ENCODE measurements at regions of chr10 and their contacts with region 1.

Region 1: DNA sequence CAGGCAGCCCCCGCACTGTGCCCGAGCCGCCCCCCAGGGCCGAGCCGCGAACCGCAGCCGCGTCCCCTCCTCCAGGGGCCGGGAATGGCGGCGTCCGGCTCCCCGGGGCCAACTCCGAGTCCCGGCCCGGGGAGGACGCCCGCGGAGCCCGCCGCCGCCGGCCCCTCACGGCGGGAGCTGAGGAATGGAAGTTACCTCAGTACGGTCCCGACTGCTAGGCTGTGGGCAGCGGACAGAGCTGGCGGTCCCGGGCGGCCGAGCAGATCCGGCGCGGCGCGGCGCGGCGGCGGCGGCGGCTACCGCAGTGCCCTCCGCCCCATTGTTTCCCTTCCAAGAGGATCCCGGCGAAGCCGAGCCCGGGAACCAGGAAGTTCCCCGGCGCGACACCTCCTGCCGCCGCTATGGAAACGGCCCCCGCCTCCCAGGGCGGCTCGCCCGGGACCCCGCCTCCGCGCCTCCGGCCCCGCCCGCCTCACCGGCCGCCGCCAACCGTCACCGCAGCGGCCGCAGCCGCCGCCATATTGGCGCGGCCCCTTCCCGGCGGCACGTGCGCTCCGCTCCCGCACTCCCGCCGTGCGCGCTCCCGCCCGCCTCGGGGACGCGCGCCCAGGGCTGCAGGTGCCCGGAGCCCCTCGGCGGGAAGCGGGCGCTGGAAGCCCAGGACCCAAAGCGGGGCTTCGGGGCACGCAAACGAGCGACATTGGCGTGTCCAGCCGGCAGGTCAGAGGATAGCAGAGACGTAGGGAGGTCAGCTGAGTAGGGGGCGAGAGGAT is at the start of gene USP6NL:
- DNase-seq: peak in 8 of 9 experiments; percentile 43 to 75 (median 63)
- ATAC-seq: peak; percentile 63
- H3K4me3 ChIP-seq: peak within 1 kb of the TSS; percentile 49 to 59
- H3K4me3 Mint-ChIP-seq: peak within 1 kb of the TSS; percentile 90
- H3K27ac ChIP-seq: peak within 1 kb of the TSS in 1 of 2 experiments; percentile 33
- H3K27ac Mint-ChIP-seq: peak within 1 kb of the TSS; percentile 87
- H3K4me1 ChIP-seq: peaks cover 14% of the 10 kb centered on the region
- H3K4me1 Mint-ChIP-seq: peaks cover 58% of the 10 kb centered on the region
- H3K27me3 ChIP-seq: peaks cover 0 to 3% of the 10 kb centered on the region in 2 experiments
- H3K27me3 Mint-ChIP-seq: no peaks in the 10 kb centered on the region
- CTCF ChIP-seq: no peak
- total RNA-seq, gene USP6NL: 5.7 to 6.3 TPM

Region 2: GRCh38 chr10:11533328-11533781 is 78.1 kb before region 1 on chr10:
- CTCF ChIA-PET with region 1: no interaction called
- POLR2A ChIA-PET with region 1: no interaction called
- intact Hi-C with region 1: loop called in 1 of 2 experiments (anchors 5 kb)
- DNase-seq: peak in 1 of 9 experiments; percentile 11
- ATAC-seq: no peak
- H3K4me3 ChIP-seq: no peak overlapping the region
- H3K4me3 Mint-ChIP-seq: no peak overlapping the region
- H3K27ac ChIP-seq: no peak overlapping the region
- H3K27ac Mint-ChIP-seq: no peak overlapping the region
- H3K4me1 ChIP-seq: peaks cover 16% of the 10 kb centered on the region
- H3K4me1 Mint-ChIP-seq: peaks cover 30% of the 10 kb centered on the region
- H3K27me3 ChIP-seq: no peaks in the 10 kb centered on the region
- H3K27me3 Mint-ChIP-seq: no peaks in the 10 kb centered on the region
- CTCF ChIP-seq: no peak

Region 3: DNA sequence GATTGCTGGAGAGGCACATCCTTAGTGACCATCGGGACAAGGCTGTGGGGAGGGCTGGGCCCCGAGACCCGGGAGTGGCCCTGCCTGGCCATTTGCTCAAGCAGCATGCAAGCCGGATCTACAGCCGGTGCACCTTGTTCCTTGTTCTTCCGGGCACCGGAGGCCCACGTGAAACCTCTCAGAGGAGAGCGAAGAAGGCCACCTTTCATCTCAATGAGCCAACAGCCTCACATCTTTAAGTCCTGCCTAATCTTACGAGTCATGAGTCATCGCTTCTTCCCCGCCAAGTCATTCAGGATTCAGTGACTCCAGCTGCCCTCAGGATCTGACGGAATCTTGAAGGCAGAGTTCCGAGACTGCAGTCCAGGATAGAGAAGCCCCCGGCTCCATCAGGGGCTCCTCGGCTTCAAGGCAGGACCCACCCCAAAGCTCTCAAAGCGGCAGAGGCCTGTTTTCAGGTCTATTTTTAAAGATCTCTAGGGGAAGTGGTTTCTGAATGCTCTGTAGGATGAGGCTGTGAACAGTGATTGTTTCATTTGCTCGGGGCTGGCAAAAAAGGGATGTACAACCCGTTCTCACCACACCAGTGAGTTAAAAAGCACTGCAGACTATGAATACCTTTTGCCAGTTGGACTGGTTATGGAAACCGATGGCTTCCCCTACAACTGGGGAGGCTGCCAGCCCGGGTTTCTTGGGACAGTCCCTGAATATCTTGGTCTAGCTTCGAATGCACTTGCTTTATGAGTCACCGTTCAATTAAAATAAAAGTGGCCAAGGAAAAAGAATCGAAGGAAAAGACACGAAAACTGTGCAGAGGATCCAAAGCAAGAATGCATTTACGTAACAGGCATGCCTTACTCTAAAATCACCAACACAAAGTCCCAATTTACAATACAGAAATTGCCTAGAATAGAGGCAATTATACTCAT is 73.5 kb after region 1 on chr10:
- CTCF ChIA-PET with region 1: no interaction called
- POLR2A ChIA-PET with region 1: interaction called, 3 read pairs
- intact Hi-C with region 1: loop called (anchors 2 to 5 kb)
- DNase-seq: peak; percentile 24 to 86 (median 62)
- ATAC-seq: peak; percentile 81
- H3K4me3 ChIP-seq: peak overlapping the region; percentile 45 to 47
- H3K4me3 Mint-ChIP-seq: peak overlapping the region; percentile 86
- H3K27ac ChIP-seq: peak overlapping the region; percentile 79 to 90
- H3K27ac Mint-ChIP-seq: peak overlapping the region; percentile 98
- H3K4me1 ChIP-seq: peaks cover 56% of the 10 kb centered on the region
- H3K4me1 Mint-ChIP-seq: peaks cover 70% of the 10 kb centered on the region
- H3K27me3 ChIP-seq: no peaks in the 10 kb centered on the region
- H3K27me3 Mint-ChIP-seq: no peaks in the 10 kb centered on the region
- CTCF ChIP-seq: no peak

Region 4: DNA sequence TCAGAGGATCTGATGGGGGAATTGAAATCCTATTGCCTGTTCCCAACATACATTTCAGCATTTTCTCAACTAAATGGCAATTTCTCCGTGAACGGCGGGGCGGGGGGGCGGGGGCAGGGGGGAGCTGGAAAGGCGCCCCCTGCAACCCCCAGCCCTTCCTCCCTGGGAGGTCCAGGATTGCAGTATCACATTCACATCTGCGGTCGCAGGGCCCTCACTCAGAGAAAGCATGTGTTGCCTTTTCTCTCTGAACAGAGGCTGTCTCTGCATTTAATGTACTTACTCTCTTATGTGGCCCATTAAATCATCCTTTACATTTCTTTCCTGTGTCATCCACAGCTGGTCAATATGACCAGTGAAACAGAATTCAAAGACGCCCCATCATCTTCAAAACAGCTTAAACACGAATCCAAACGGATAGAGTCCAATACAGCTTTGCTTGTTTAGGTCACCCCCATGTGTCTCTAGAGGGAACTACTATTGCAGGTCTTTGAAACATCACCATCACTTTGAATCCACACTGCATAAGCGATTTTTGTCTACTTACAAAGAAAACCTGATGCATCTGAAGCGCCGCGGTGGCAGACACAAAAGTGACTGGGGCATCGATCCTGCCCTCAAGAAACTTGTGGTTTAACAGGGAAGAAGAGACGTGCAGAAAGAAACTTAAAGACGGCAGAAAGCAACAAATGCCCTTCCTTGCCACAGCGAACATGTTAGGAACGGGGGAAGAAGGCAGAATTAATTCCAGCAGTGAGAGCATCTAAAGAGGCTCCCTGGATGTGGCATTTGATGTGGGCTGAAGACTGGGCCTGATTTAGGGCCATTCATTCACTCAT is 113.7 kb after region 1 on chr10:
- CTCF ChIA-PET with region 1: no interaction called
- POLR2A ChIA-PET with region 1: no interaction called
- intact Hi-C with region 1: loop called in 1 of 2 experiments (anchors 10 kb)
- DNase-seq: peak in 2 of 9 experiments; percentile 48 to 68
- ATAC-seq: peak; percentile 73
- H3K4me3 ChIP-seq: no peak overlapping the region
- H3K4me3 Mint-ChIP-seq: no peak overlapping the region
- H3K27ac ChIP-seq: no peak overlapping the region
- H3K27ac Mint-ChIP-seq: no peak overlapping the region
- H3K4me1 ChIP-seq: no peaks in the 10 kb centered on the region
- H3K4me1 Mint-ChIP-seq: peaks cover 4% of the 10 kb centered on the region
- H3K27me3 ChIP-seq: no peaks in the 10 kb centered on the region
- H3K27me3 Mint-ChIP-seq: peaks cover 8% of the 10 kb centered on the region
- CTCF ChIP-seq: peak; percentile 79

Region 5: DNA sequence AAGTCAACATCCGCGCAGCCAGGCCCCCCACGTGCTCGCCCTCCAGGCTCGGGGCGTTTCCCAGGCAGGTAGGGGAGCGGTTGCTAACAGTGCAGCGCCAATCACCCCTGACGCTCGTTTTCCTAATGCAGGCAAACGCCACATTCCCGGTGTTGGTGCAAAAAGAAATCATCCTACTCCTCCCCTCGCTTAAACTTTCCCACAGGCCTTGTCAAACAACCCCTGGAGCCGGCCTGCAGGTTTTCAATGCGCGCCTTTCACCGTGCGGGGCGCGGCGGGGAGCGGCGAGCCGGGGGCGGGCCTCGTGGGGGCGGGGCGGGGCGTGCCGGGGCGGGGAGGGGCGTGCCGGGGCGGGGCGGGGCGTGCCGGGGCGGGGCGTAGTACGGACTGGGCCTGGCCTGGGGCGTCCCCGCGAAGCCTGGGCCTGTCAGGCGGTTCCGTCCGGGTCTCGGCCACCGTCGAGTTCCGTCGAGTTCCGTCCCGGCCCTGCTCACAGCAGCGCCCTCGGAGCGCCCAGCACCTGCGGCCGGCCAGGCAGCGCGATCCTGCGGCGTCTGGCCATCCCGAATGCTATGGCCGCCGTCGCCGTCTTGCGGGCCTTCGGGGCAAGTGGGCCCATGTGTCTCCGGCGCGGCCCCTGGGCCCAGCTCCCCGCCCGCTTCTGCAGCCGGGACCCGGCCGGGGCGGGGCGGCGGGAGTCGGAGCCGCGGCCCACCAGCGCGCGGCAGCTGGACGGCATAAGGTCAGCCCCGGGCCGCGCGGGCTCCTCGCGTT is 130.8 kb after region 1 on chr10 and contains the start of gene ECHDC3:
- CTCF ChIA-PET with region 1: no interaction called
- POLR2A ChIA-PET with region 1: no interaction called
- intact Hi-C with region 1: loop called in 1 of 2 experiments (anchors 10 kb)
- DNase-seq: peak; percentile 12 to 70 (median 49)
- ATAC-seq: peak; percentile 90
- H3K4me3 ChIP-seq: peak within 1 kb of the TSS; percentile 48 to 62
- H3K4me3 Mint-ChIP-seq: peak within 1 kb of the TSS; percentile 81
- H3K27ac ChIP-seq: no peak within 1 kb of the TSS
- H3K27ac Mint-ChIP-seq: no peak within 1 kb of the TSS
- H3K4me1 ChIP-seq: peaks cover 8% of the 10 kb centered on the region
- H3K4me1 Mint-ChIP-seq: peaks cover 16% of the 10 kb centered on the region
- H3K27me3 ChIP-seq: peaks cover 0 to 4% of the 10 kb centered on the region in 2 experiments
- H3K27me3 Mint-ChIP-seq: peaks cover 21% of the 10 kb centered on the region
- CTCF ChIP-seq: no peak
- total RNA-seq, gene ECHDC3: 0.90 to 1.3 TPM

Measured in CD8-positive, alpha-beta T cell (primary cell).